ENCODE measurements at regions of chr2 and their contacts with region 1.

Region 1: DNA sequence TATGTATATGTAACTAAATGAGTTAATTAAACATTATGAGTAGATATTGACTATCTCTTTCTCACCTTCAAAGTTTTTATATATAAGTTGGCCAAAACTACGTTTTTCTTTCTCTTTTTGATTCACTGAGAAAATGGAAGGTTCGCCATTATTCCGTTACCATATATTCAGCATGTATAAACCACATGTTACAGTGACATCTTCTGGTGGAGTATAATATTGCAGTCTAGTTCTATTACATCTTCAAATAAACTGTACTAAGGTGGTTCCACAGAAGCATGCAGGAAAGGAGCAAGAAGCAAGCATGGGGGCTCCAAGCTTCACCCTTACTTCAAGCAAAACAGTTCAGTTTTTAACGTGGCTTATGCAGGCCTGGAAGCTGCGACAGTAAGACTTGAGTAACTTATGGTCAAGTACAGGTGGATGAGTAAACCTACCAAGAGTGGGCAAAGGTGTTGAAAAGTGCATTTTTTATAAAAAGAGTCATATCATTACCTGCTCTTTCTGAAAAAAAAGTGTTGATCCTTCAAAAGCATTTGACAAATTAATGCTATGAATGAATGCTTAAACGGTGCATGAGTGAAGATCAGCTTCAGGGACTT is 129.8 kb upstream of the RAB6C start:
- DNase-seq: peak; percentile 75
- H3K4me3 Mint-ChIP-seq: no peak overlapping the region
- H3K27ac Mint-ChIP-seq: no peak overlapping the region
- H3K4me1 Mint-ChIP-seq: no peaks in the 10 kb centered on the region
- H3K27me3 Mint-ChIP-seq: no peaks in the 10 kb centered on the region
- CTCF ChIP-seq: peak; percentile 73

Region 2: DNA sequence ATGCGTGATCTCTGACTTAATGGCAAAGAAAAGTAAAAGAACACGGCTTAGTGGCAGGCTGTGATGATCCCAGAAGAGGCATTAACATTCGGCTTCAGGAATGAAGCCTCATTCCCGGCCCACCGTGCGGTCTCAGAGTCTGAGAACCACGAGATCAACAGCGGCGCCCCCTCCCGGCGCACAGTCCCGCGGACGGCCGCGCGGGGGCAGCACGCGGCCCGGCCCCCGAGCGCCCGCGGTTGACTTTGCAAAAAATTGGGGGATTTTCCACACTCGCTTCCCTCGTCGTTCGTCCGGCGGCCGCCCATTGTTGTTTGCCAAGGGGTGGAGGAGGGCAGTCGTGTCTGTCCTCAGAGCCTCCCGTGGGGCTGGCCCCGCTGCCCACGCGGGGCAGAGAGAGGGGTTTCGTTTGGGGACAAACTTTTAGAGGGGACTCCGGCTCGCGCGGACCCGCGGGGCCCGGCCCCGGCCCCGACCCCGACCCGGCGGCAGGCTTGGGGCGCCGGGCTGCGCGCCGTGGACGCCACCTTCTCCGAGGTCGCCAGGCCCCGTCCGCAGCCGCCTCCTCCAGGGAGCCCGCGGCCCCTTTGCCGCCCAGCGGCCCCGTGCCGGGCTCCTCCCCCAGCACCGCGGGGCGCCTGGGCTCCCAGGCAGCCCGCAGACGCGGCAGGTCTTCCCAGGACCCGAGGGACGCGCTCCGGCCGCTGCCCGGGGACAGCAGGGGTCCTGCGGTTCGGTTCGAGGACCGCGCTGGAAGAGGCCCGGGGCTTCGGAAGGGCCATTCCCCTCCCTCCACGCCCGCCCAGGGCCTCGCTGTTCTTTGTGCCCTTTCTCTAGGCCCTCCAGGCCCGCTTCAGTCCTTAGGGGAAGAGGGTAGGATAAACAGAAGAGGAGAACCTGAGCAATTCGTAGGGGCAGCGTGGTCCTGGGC is 1527.6 kb before region 1 on chr2:
- CTCF ChIA-PET with region 1: interaction called, 5 read pairs
- POLR2A ChIA-PET with region 1: no interaction called
- intact Hi-C with region 1: loop called (anchors 1 kb)
- DNase-seq: peak; percentile 79
- H3K4me3 Mint-ChIP-seq: peak overlapping the region; percentile 60
- H3K27ac Mint-ChIP-seq: no peak overlapping the region
- H3K4me1 Mint-ChIP-seq: no peaks in the 10 kb centered on the region
- H3K27me3 Mint-ChIP-seq: no peaks in the 10 kb centered on the region
- CTCF ChIP-seq: peak; percentile 92

Region 3: GRCh38 chr2:128736689-128737545 is 1112.7 kb before region 1 on chr2:
- CTCF ChIA-PET with region 1: no interaction called
- POLR2A ChIA-PET with region 1: no interaction called
- intact Hi-C with region 1: loop called (anchors 10 kb)
- DNase-seq: peak; percentile 66
- H3K4me3 Mint-ChIP-seq: peak overlapping the region; percentile 56
- H3K27ac Mint-ChIP-seq: no peak overlapping the region
- H3K4me1 Mint-ChIP-seq: peaks cover 18% of the 10 kb centered on the region
- H3K27me3 Mint-ChIP-seq: no peaks in the 10 kb centered on the region
- CTCF ChIP-seq: peak; percentile 99

Region 4: DNA sequence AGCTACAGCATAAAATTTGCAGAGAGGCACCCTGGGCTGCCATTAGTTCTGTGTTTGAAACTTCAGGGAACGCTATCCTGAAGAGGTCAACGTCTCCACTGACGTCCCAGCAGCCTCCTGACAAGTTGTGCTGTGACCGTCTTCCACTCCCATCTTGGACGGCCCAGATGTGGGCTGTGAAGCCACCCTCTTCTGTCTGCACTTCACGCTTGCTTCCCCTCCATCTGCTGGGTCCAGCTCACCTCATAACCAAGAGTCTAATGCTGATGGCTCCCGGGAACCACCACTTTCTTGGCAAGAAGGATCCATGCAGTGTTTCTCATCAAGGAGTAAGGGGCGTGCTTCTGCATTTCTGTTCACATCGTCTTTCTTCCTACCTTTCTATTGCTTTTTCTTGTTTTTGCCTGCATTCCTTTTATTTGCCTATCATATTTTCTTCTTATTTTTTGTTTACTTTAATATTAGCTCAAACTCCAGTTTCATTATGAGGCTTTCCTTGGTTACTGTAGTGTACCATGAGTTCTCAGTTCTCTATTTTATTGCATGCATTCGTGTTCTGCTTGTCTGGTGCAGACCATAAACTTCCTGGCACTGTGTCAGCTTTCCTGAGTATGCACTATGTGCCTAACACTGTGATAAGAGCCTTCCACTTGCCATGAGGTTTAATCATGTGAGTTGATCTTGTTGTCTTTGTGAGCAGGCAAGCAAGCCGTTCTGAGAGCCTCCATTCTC is 502.0 kb before region 1 on chr2:
- CTCF ChIA-PET with region 1: no interaction called
- POLR2A ChIA-PET with region 1: no interaction called
- intact Hi-C with region 1: no loop called
- DNase-seq: no peak
- H3K4me3 Mint-ChIP-seq: no peak overlapping the region
- H3K27ac Mint-ChIP-seq: no peak overlapping the region
- H3K4me1 Mint-ChIP-seq: no peaks in the 10 kb centered on the region
- H3K27me3 Mint-ChIP-seq: peaks cover 19% of the 10 kb centered on the region
- CTCF ChIP-seq: no peak

Region 5: GRCh38 chr2:129396980-129397599 is 452.6 kb before region 1 on chr2:
- CTCF ChIA-PET with region 1: interaction called, 4 read pairs
- POLR2A ChIA-PET with region 1: no interaction called
- intact Hi-C with region 1: loop called (anchors 10 kb)
- DNase-seq: peak; percentile 43
- H3K4me3 Mint-ChIP-seq: no peak overlapping the region
- H3K27ac Mint-ChIP-seq: no peak overlapping the region
- H3K4me1 Mint-ChIP-seq: no peaks in the 10 kb centered on the region
- H3K27me3 Mint-ChIP-seq: no peaks in the 10 kb centered on the region
- CTCF ChIP-seq: peak; percentile 82

Region 6: GRCh38 chr2:129689653-129690448 is 159.8 kb before region 1 on chr2:
- CTCF ChIA-PET with region 1: no interaction called
- POLR2A ChIA-PET with region 1: no interaction called
- intact Hi-C with region 1: no loop called
- DNase-seq: no peak
- H3K4me3 Mint-ChIP-seq: no peak overlapping the region
- H3K27ac Mint-ChIP-seq: no peak overlapping the region
- H3K4me1 Mint-ChIP-seq: no peaks in the 10 kb centered on the region
- H3K27me3 Mint-ChIP-seq: no peaks in the 10 kb centered on the region
- CTCF ChIP-seq: no peak

Region 7: DNA sequence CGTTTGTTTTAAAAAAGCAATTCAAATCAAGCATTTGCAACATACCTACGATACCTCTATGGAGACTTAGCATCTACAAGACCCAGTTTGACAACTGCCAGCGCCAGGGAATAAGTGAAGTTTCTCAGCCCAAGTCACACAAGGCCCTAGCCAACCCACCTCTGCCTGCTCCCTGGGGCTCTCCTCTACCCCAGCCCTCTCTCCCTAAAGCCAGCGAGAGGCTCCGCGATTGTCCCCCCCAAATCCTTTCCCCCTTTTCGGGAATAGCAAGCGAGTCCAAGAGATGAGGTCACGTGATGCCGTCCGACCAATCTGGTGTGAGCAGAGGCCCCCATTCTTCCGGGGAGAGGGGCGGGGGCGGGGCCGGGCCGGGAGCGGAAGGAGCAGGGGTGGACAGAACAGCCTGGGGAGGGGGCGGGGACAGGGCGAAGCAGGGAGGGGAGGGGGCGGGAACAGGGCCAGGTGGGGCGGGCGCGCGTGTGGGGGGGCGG is 27.7 kb after region 1 on chr2:
- CTCF ChIA-PET with region 1: interaction called, 10 read pairs
- POLR2A ChIA-PET with region 1: no interaction called
- intact Hi-C with region 1: no loop called
- DNase-seq: peak; percentile 80
- H3K4me3 Mint-ChIP-seq: peak overlapping the region; percentile 84
- H3K27ac Mint-ChIP-seq: no peak overlapping the region
- H3K4me1 Mint-ChIP-seq: peaks cover 6% of the 10 kb centered on the region
- H3K27me3 Mint-ChIP-seq: no peaks in the 10 kb centered on the region
- CTCF ChIP-seq: no peak

Region 8: GRCh38 chr2:130332271-130333073 is 482.8 kb after region 1 on chr2:
- CTCF ChIA-PET with region 1: interaction called, 3 read pairs
- POLR2A ChIA-PET with region 1: no interaction called
- intact Hi-C with region 1: loop called (anchors 1 kb)
- DNase-seq: peak; percentile 84
- H3K4me3 Mint-ChIP-seq: no peak overlapping the region
- H3K27ac Mint-ChIP-seq: no peak overlapping the region
- H3K4me1 Mint-ChIP-seq: peaks cover 15% of the 10 kb centered on the region
- H3K27me3 Mint-ChIP-seq: no peaks in the 10 kb centered on the region
- CTCF ChIP-seq: peak; percentile 95

Measured in MCF 10A (cell line).